Activated CD4-positive, alpha-beta T cell treated with anti-CD3 and anti-CD28 coated beads, Interleukin-2, amount 10 ng/mL, durations not matched to agents 24 days and 14 days (primary cell): ENCODE measurements at regions of chr20 and their contacts with region 1.

Region 1: GRCh38 chr20:47501483-47502270 is at the start of gene NCOA3:
- DNase-seq: peak; percentile 97
- H3K4me3 Mint-ChIP-seq: peak within 1 kb of the TSS; percentile 99
- H3K27ac Mint-ChIP-seq: peak within 1 kb of the TSS; percentile 99
- H3K4me1 Mint-ChIP-seq: peaks cover 45% of the 10 kb centered on the region
- H3K27me3 Mint-ChIP-seq: peaks cover 2% of the 10 kb centered on the region
- total RNA-seq, gene NCOA3: 140 TPM in 2 replicates

Region 2: DNA sequence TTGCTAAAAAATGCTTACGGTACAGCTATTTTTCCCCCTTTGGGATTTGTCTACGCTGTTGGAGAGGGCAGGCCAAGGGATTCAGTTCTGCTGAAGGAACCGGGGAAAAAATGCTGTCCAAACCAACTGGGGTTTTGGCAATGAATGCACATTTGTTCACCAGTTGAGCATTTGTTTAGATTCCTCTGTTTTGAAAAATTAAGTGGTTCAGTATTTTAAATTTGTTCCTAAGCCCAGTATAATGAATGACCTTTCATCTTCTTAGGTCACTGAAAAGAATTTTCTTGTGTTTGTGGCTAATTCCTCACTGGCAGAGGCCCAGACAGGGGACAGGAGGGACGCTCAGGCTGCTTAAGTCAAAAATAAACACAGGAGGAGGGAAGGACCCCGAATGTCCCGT is 617.8 kb before region 1 on chr20:
- intact Hi-C with region 1: no loop called
- DNase-seq: peak; percentile 12
- H3K4me3 Mint-ChIP-seq: no peak overlapping the region
- H3K27ac Mint-ChIP-seq: no peak overlapping the region
- H3K4me1 Mint-ChIP-seq: no peaks in the 10 kb centered on the region
- H3K27me3 Mint-ChIP-seq: peaks cover 23% of the 10 kb centered on the region

Region 3: DNA sequence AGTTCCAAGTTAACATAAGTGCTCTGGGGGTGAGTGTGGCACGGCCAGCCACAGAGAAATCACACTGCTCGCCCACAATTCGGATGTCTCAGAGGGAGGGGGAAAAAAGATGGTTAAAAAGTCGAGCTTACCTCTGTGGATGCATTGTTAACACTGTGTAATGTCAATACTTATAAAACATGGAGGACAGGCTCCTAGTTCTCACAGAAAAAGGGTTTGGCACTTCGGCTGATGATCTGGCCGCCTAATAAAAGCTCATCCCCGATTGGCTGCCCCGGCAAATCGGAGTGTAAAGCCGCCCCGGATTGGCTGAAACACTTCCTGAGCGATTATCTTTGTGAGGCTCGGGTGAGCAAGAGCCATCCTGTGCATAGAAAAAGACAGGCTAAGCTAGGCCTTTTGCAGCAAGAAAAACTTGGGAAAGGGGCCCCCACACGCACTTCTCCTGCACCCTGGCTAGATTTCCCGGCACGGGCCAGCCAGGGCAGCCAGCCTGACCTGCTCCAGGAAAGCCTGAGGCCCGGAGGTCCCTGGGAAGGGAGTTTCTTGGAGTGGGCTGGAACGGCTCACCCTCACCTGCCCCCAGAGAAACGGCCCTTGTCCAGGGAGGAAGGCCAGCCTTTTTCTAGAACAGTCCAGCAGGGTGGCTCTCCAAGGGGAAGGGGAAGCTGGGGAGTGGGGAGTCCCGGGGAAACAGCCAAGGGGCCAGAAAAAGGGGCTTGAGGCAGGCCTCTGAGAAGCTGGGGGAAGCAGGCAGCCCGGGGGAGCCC is 145.0 kb before region 1 on chr20 and contains the start of gene ZMYND8:
- intact Hi-C with region 1: loop called (anchors 5 kb)
- DNase-seq: peak; percentile 99
- H3K4me3 Mint-ChIP-seq: peak within 1 kb of the TSS; percentile 91
- H3K27ac Mint-ChIP-seq: peak within 1 kb of the TSS; percentile 99
- H3K4me1 Mint-ChIP-seq: peaks cover 30% of the 10 kb centered on the region
- H3K27me3 Mint-ChIP-seq: no peaks in the 10 kb centered on the region
- total RNA-seq, gene ZMYND8: 38.1 and 40.0 TPM in 2 replicates

Region 4: GRCh38 chr20:47392015-47392720 is 109.5 kb before region 1 on chr20:
- intact Hi-C with region 1: no loop called
- DNase-seq: no peak
- H3K4me3 Mint-ChIP-seq: no peak overlapping the region
- H3K27ac Mint-ChIP-seq: peak overlapping the region; percentile 65
- H3K4me1 Mint-ChIP-seq: peaks cover 19% of the 10 kb centered on the region
- H3K27me3 Mint-ChIP-seq: no peaks in the 10 kb centered on the region

Region 5: GRCh38 chr20:47487175-47487917 is 14.3 kb before region 1 on chr20:
- intact Hi-C with region 1: loop called (anchors 1 kb)
- DNase-seq: peak; percentile 92
- H3K4me3 Mint-ChIP-seq: peak overlapping the region; percentile 72
- H3K27ac Mint-ChIP-seq: peak overlapping the region; percentile 99
- H3K4me1 Mint-ChIP-seq: peaks cover 43% of the 10 kb centered on the region
- H3K27me3 Mint-ChIP-seq: no peaks in the 10 kb centered on the region

Region 6: GRCh38 chr20:47610247-47610944 is 108.7 kb after region 1 on chr20:
- intact Hi-C with region 1: loop called (anchors 2 kb)
- DNase-seq: peak; percentile 90
- H3K4me3 Mint-ChIP-seq: peak overlapping the region; percentile 78
- H3K27ac Mint-ChIP-seq: peak overlapping the region; percentile 95
- H3K4me1 Mint-ChIP-seq: peaks cover 68% of the 10 kb centered on the region
- H3K27me3 Mint-ChIP-seq: no peaks in the 10 kb centered on the region

Region 7: DNA sequence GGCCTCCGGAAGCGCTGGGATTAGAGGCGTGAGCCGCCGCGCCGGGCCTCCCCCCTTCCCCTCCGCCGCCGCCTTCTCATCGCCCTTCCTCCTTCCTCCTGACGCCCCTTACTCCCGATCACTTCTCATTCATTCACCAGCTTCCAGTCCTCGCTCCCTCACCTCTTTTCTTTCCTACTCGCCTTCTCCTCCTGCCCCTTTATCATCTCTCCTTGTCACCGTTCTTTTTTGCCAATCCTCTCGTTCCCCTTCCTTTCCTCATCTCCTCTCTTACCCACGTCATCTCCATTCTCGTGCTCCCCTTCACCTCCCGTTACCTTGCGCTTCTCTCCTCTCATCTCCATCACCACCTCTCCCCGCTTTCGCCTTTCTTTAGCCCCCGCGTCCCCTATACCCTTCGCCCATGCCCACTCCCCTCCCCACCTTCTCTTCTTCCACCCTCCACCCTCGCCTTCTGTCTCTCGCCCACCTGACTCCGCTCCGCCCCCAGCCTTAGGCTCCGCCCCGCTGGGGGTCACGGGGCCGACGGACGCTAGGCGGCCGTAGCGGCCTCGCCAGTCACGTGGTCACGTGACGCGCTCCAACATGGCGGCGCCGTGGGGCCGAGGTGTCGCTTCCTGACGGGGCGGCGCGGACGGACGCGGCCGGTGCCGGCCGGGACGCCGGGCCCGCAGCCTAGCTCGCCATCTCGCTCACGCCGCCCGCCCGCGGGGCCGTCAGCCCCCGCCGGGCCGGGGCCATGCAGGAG is 1419.6 kb after region 1 on chr20 and contains the start of gene ARFGEF2:
- intact Hi-C with region 1: loop called (anchors 5 kb)
- DNase-seq: peak; percentile 100
- H3K4me3 Mint-ChIP-seq: peak within 1 kb of the TSS; percentile 95
- H3K27ac Mint-ChIP-seq: peak within 1 kb of the TSS; percentile 97
- H3K4me1 Mint-ChIP-seq: peaks cover 37% of the 10 kb centered on the region
- H3K27me3 Mint-ChIP-seq: peaks cover 4% of the 10 kb centered on the region
- total RNA-seq, gene ARFGEF2: 28.0 and 30.9 TPM in 2 replicates